Posterior cingulate gyrus (tissue), 11 donors: ENCODE measurements at regions of chr17 and their contacts with region 1.

Region 1: DNA sequence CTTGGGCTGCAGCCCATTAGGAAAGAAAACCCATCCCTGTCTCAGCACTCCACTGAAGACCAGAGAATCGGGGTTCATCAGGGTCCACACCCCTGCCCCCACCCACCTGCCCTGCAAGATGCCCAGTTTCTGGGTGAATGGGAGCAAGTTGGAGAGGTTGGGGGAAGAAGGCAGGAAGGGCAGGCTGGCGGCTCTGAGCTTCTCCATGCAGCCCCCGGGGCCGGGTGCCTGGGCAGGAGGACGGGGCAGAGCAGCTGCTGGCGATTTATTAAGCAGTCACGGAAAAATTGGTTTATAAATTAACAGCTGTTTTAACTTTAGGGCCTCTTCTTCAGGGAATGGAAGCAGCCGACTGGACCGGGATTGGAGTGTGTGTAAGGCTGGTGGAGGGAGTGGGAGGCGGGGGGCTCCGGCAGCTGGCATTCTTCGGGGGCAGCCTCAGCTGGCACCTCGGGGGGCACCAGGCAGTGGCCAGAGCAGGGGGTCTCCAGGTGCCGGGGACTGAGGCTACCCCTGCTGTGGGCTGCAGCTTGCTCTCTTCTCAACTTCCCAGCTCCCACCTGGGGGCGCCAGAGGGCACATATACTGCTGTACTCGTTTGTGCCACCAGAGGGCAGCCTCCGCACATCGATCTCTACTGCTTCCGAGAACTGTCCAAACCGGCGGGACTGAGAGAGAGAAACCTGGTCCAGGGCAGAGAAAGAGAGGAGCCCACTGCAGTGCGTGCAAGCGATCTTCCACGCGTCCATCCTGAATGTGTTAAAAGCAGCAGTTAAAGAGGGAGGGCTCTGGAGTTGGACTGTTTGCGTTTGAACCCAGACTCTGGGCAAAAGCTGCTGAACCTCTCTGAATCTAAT is 5.0 kb upstream of the PPP1R1B start:
- DNase-seq: peak; percentile 84 to 98 (median 92)

Region 2: DNA sequence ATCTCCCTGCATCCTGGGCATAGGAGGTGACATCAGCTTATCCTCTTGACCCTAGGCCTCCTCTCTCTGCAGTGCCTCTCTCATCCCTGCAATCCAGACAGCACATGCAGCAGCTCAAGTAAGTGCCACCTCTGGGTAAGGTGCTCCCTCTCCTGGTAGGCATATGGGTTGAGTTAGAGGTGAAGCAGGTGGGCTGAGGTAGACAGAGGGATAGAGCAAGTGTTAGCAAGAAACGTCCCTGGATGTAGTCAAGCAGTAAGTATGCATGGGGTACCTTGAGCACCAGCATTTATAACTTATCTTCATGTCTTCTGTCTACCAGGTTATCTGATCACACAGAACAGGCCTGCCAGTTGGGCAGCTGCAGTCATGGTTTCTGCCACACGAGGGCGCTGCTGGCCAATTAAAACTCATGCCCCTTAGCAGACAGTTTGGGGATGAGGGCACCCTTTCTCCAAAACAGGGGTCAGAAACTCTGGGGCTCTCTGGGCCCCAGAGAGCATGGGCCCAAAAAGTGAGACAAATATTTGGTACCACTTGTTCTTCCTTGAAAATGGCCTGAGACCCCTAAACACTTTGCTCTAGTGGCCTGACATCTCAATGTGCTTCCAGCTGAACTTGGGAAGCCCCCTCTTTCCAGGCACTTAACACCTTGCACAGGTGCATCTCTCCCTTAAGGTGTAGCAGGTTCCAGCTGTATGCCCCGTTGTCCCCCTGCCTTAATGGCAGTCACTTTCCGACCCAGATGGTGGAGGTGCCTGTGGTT is 73.9 kb before region 1 on chr17:
- intact Hi-C with region 1: loop called (anchors 5 kb)
- DNase-seq: peak; percentile 47 to 96 (median 77)

Region 3: GRCh38 chr17:39671651-39672521 is 50.1 kb after region 1 on chr17:
- intact Hi-C with region 1: loop called (anchors 1 kb)
- DNase-seq: peak in 4 of 10 donors; percentile 45 to 89 (median 64)

Region 4: GRCh38 chr17:39730095-39730921 is 108.6 kb after region 1 on chr17 and contains the start of gene MIEN1:
- intact Hi-C with region 1: loop called (anchors 5 kb)
- DNase-seq: peak; percentile 87 to 99 (median 94)